ENCODE measurements at regions of chr15 and their contacts with region 1.

Region 1: DNA sequence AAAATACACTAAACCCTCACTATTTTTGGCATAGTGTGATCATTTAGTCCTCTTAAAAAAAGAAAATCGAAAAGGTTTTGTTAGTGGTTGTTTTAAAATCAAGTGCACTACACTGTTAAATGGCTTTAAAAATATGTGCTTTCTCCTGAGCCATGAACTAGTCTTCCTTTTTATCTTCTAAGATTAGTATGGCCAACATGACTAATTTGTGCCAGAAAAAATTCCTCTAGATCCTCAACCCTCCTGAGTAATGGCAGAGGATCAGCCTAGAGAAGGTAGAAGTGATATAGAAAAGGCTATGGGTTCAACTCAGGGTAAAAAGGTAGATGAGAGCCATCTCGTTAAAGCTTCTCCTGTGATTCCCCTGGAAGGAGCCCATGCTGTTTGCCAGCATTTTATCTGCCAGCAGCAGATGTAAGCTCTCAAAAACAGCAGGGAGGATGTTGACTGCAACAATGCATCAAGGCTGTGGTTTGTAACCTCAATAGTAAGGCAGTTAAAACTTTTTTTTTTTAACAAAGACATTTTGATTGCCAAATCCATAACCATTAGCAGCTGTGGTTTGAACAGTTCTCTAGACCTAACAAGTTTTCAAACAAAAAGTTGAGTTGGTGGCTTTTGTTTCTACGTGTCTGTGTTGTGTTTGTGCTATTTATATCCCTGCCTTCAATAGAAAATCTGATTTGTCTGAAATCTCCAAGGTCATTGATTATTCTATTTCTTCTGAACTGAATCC is 30.2 kb upstream of the ZNF609 start:
- DNase-seq: peak; percentile 50
- H3K4me3 Mint-ChIP-seq: no peak overlapping the region
- H3K27ac Mint-ChIP-seq: peak overlapping the region; percentile 76
- H3K4me1 Mint-ChIP-seq: peaks cover 45% of the 10 kb centered on the region
- H3K27me3 Mint-ChIP-seq: no peaks in the 10 kb centered on the region

Region 2: DNA sequence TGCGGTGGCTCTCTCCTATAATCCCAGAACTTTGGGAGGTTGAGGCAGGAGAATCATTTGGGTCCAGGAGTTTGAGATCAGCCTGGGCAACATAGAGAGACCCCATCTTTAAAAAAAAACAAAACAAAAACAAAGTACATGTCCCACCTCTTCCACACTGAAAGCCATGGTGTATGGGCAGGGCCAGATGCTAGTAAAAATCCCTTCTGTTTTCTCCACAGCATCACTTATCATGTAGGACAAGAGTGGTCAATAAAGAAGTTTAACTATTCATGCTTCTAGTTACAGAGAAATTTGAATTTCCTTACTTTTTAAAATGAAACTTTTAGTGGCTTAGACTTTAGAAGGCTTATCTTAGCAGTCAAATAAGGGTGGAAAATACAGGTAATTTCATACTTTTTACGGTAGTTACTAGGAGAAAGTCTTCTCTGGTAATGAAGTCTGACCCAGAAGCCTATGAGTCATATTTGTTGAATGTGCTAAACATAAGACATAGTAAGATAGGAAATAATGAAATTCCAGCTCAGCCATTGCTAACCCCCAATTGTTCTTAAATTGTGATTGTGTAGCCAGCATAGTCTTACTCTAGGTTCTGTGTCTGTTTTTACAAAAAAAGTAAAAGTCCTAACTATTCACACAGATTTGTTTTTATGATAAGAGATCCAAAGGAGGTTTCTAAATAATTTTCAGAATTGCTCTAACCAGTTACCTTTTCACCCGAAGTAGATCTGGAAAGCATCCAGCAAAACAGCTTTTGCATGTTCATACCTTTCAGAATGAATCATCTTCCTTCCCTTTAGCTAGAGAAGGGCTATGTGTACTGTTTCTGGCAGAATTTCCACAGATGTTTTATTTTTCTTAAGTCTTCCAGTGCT is 13.8 kb after region 1 on chr15:
- CTCF ChIA-PET with region 1: interaction called, 3 read pairs
- intact Hi-C with region 1: loop called (anchors 1 kb)
- DNase-seq: peak; percentile 20
- H3K4me3 Mint-ChIP-seq: peak overlapping the region; percentile 66
- H3K27ac Mint-ChIP-seq: peak overlapping the region; percentile 94
- H3K4me1 Mint-ChIP-seq: peaks cover 62% of the 10 kb centered on the region
- H3K27me3 Mint-ChIP-seq: no peaks in the 10 kb centered on the region

Region 3: DNA sequence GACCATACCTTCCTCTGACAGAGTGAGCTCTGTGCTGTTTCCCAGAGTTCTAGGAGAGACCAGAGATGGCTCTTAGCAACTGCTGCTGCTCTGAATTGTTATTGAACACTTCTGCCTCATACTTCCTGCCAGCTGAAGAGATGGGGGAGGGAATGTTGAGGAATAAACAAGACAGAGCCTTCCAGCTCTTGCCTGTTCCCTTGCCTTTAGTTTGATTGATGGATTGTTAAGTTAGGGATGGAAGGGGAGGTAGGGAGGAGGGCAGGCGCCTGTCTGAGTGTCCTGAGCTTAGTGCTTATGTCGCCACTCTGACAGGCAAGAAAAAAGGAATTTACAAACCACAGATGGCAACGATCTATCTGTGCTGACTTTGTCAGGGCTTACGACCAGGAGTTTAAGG is 73.0 kb after region 1 on chr15:
- CTCF ChIA-PET with region 1: no interaction called
- intact Hi-C with region 1: no loop called
- DNase-seq: peak; percentile 27
- H3K4me3 Mint-ChIP-seq: peak overlapping the region; percentile 5
- H3K27ac Mint-ChIP-seq: peak overlapping the region; percentile 86
- H3K4me1 Mint-ChIP-seq: peaks cover 83% of the 10 kb centered on the region
- H3K27me3 Mint-ChIP-seq: no peaks in the 10 kb centered on the region

Region 4: GRCh38 chr15:64681424-64682024 is 251.4 kb after region 1 on chr15:
- CTCF ChIA-PET with region 1: interaction called, 6 read pairs
- intact Hi-C with region 1: loop called (anchors 1 kb)
- DNase-seq: peak; percentile 38
- H3K4me3 Mint-ChIP-seq: no peak overlapping the region
- H3K27ac Mint-ChIP-seq: no peak overlapping the region
- H3K4me1 Mint-ChIP-seq: peaks cover 2% of the 10 kb centered on the region
- H3K27me3 Mint-ChIP-seq: no peaks in the 10 kb centered on the region

Region 5: GRCh38 chr15:64856429-64857145 is 426.4 kb after region 1 on chr15:
- CTCF ChIA-PET with region 1: no interaction called
- intact Hi-C with region 1: no loop called
- DNase-seq: no peak
- H3K4me3 Mint-ChIP-seq: no peak overlapping the region
- H3K27ac Mint-ChIP-seq: no peak overlapping the region
- H3K4me1 Mint-ChIP-seq: peaks cover 39% of the 10 kb centered on the region
- H3K27me3 Mint-ChIP-seq: no peaks in the 10 kb centered on the region